ENCODE measurements at regions of chr1 and their contacts with region 1.

Region 1: GRCh38 chr1:175023043-175023921 is at the start of gene MRPS14:
- DNase-seq: peak; percentile 96
- H3K4me3 Mint-ChIP-seq: peak within 1 kb of the TSS; percentile 99
- H3K27ac Mint-ChIP-seq: peak within 1 kb of the TSS; percentile 92
- H3K4me1 Mint-ChIP-seq: peaks cover 29% of the 10 kb centered on the region
- H3K27me3 Mint-ChIP-seq: no peaks in the 10 kb centered on the region
- total RNA-seq, gene MRPS14: 31.5 and 32.9 TPM in 2 replicates

Region 2: GRCh38 chr1:174682419-174683008 is 340.8 kb before region 1 on chr1:
- intact Hi-C with region 1: no loop called
- DNase-seq: no peak
- H3K4me3 Mint-ChIP-seq: no peak overlapping the region
- H3K27ac Mint-ChIP-seq: no peak overlapping the region
- H3K4me1 Mint-ChIP-seq: no peaks in the 10 kb centered on the region
- H3K27me3 Mint-ChIP-seq: no peaks in the 10 kb centered on the region

Region 3: DNA sequence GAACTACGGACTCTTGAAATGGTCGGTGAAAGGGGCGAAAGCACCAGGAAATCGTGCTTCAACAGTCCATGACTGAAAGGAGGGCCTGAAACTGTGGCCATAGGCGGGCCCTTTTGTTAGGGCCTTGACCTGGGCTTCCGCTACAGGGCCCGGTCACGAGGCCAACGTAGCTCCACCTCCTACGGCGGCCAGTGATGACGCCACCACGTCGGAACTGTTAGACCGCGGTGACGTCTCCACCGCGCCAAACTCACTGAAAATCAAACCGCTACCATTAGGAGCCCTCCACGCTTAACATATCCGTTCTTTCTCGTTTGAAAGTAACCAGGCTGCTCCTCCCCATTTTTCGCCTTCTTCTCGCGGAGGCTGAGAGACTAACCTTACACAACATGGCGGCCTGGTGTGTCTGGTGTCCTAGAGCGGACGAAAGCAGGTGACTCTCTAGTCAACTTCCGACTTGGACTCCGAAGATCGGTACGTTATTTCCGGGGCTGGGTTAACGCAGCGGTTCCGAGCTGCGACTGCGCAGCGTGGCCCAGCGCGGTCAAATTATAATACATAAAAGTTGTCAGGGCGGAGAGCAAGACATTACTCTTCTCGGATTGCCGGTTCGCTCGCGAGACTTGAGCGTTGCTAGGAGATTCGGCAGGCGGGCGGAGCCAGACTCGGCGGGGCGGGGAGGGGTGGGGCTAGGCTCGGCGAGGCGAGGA is 23.9 kb before region 1 on chr1:
- intact Hi-C with region 1: loop called (anchors 1 kb)
- DNase-seq: peak; percentile 96
- H3K4me3 Mint-ChIP-seq: no peak overlapping the region
- H3K27ac Mint-ChIP-seq: no peak overlapping the region
- H3K4me1 Mint-ChIP-seq: peaks cover 38% of the 10 kb centered on the region
- H3K27me3 Mint-ChIP-seq: no peaks in the 10 kb centered on the region

Region 4: DNA sequence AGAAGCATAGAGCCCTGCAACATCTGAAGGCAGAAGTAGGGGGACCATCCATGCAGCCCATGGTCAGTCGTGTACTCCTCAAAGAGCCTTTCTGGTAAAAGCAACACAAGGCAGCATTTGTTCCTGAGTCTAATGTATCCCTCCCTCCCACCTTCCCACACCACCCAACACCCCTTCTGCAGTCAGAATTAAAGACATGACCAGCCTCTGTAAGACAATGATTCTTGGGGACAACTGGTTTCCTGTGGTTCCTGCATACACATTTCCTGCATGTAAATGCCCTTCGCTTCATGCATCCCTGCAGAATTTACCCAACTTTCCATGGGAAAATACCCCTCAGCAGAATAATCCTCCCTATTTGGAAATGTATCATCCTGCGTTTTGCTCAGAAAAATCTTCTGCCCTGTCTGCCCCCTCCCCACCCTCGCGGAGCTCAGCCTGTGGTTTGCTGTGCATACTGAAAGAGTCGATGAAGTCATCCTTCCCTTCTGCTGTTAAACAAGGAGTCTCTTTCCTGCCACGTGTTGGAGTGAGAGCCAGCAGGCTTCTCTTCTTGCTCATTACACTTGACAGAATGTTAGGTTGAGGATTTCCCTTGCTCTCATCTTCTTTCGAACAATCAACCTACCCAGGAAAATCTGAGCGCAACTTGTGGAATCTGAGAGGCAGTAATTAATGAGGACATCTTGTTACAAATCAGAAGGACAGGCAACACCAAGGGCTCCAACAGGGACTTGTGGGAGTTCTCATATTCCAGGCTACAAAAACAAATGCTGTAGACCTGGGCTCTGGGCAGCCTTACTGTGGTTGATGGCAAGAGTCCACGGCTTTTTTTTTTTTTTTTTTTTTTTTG is 49.0 kb after region 1 on chr1:
- intact Hi-C with region 1: loop called (anchors 5 kb)
- DNase-seq: no peak
- H3K4me3 Mint-ChIP-seq: no peak overlapping the region
- H3K27ac Mint-ChIP-seq: no peak overlapping the region
- H3K4me1 Mint-ChIP-seq: peaks cover 37% of the 10 kb centered on the region
- H3K27me3 Mint-ChIP-seq: peaks cover 2% of the 10 kb centered on the region

Region 5: GRCh38 chr1:175146529-175147213 is 123.4 kb after region 1 on chr1:
- intact Hi-C with region 1: loop called (anchors 5 kb)
- DNase-seq: peak; percentile 45
- H3K4me3 Mint-ChIP-seq: no peak overlapping the region
- H3K27ac Mint-ChIP-seq: no peak overlapping the region
- H3K4me1 Mint-ChIP-seq: no peaks in the 10 kb centered on the region
- H3K27me3 Mint-ChIP-seq: peaks cover 27% of the 10 kb centered on the region

Region 6: GRCh38 chr1:175200678-175201521 is 177.6 kb after region 1 on chr1:
- intact Hi-C with region 1: no loop called
- DNase-seq: no peak
- H3K4me3 Mint-ChIP-seq: no peak overlapping the region
- H3K27ac Mint-ChIP-seq: no peak overlapping the region
- H3K4me1 Mint-ChIP-seq: peaks cover 16% of the 10 kb centered on the region
- H3K27me3 Mint-ChIP-seq: no peaks in the 10 kb centered on the region